GM13977 (cell line): ENCODE measurements at regions of chr1 and their contacts with region 1.

Region 1: GRCh38 chr1:111489604-111490003 is 13.8 kb downstream of the ADORA3 start:
- DNase-seq: no peak
- CTCF ChIP-seq: no peak

Region 2: GRCh38 chr1:111436726-111437125 is 52.9 kb before region 1 on chr1:
- in situ Hi-C with region 1: no loop called
- DNase-seq: no peak
- CTCF ChIP-seq: no peak

Region 3: GRCh38 chr1:111769517-111770146 is 280.0 kb after region 1 on chr1:
- in situ Hi-C with region 1: loop called (anchors 10 kb)
- DNase-seq: peak; percentile 63
- CTCF ChIP-seq: peak; percentile 80